ENCODE measurements at regions of chr3 and their contacts with region 1.

Region 1: GRCh38 chr3:111260878-111261277 is 189.3 kb downstream of the NECTIN3 start:
- DNase-seq: no peak
- ATAC-seq: peak; percentile 71
- H3K4me3 Mint-ChIP-seq: no peak overlapping the region
- H3K27ac Mint-ChIP-seq: no peak overlapping the region
- H3K4me1 Mint-ChIP-seq: peaks cover 11% of the 10 kb centered on the region
- H3K27me3 Mint-ChIP-seq: peaks cover 12% of the 10 kb centered on the region

Region 2: DNA sequence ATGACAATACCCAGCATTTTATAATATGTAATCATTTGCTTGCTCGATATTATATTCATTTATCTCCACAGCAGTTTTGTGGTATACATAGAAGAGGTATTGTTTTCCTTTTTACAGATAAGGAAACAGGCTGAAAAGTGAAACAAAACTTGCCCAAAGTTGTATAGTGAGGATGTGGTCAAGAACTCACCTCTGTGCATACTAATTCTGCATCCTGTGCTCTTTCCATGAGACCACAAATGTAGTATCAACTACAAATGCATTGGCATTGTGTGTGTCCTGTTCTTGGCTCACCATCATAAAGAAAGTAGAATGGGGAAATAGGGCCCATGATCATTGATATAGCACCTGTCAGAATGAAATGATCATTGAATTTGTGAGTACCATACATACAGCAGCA is 22.0 kb before region 1 on chr3:
- CTCF ChIA-PET with region 1: interaction called, 3 read pairs
- POLR2A ChIA-PET with region 1: no interaction called
- intact Hi-C with region 1: loop called in 1 of 2 experiments (anchors 1 kb)
- DNase-seq: no peak
- ATAC-seq: peak; percentile 94
- H3K4me3 Mint-ChIP-seq: no peak overlapping the region
- H3K27ac Mint-ChIP-seq: no peak overlapping the region
- H3K4me1 Mint-ChIP-seq: peaks cover 15% of the 10 kb centered on the region
- H3K27me3 Mint-ChIP-seq: no peaks in the 10 kb centered on the region